Dorsolateral prefrontal cortex (tissue), 120 donors: ENCODE measurements at regions of chr19 and their contacts with region 1.

Region 1: GRCh38 chr19:34232566-34233481 is 21.5 kb upstream of the GARRE1 start:
- DNase-seq: peak in 6 of 10 donors; percentile 35 to 73 (median 55)
- H3K4me3 ChIP-seq: peak overlapping the region in 19 of 59 donors; percentile 1 to 38 (median 18)
- H3K27ac ChIP-seq: peak overlapping the region; percentile 40 to 97 (median 90)
- H3K27me3 ChIP-seq: no peaks in the 10 kb centered on the region
- CTCF ChIP-seq: peak in 2 of 56 donors; percentile 15

Region 2: DNA sequence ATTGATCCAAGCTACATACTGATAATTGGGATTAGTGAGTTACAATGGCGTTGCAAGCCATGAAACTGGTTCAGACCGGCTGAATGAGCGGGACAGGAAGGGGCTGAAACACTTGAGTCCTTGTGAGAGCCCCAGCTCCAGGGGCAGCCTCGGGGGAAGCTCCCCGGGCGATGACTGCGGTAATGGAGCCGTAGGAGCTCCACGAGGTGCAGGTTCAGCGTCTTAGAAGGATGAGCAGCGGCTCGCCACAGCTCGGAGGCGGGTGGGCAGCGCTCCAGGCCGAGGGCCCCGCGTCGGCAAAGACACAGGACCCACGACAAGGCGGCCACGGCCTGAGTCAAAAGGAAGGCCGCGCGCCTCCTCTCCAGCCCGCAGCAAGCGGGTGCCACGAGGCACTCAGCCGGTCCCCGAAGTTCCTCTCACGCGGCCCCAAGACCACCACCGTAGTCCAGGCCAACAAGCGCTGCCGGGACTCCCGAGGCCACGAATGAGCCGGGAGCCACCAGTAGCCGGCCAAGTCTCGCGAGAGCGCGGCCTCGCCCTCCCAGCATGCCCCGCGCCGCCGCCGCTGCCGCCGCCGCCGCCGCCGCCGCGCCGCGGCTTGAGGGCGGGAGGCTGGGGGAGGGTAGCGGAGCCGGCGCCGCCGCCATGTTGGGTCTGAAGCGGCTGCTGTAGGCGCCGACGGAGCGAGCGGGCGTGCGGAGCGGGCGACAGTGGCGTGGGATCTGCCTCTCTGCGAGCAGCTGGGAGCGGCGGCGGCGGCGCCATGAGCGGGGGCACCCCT is 60.8 kb before region 1 on chr19 and contains the start of gene LSM14A:
- intact Hi-C with region 1: loop called in 1 of 2 experiments (anchors 5 kb)
- DNase-seq: peak; percentile 71 to 93 (median 82)
- H3K4me3 ChIP-seq: peak within 1 kb of the TSS; percentile 74 to 99 (median 94)
- H3K27ac ChIP-seq: peak within 1 kb of the TSS; percentile 91 to 100 (median 99)
- H3K27me3 ChIP-seq: no peaks in the 10 kb centered on the region
- CTCF ChIP-seq: peak in 14 of 56 donors; percentile 6 to 30 (median 14)
- total RNA-seq, gene LSM14A: 52.9 to 108 (median 72.5) TPM

Region 3: GRCh38 chr19:34184880-34185491 is 47.8 kb before region 1 on chr19:
- intact Hi-C with region 1: no loop called
- DNase-seq: no peak
- H3K4me3 ChIP-seq: peak overlapping the region in 1 of 59 donors; percentile 3
- H3K27ac ChIP-seq: peak overlapping the region in 15 of 59 donors; percentile 0 to 50 (median 21)
- H3K27me3 ChIP-seq: no peaks in the 10 kb centered on the region
- CTCF ChIP-seq: no peak

Region 4: GRCh38 chr19:34244611-34245299 is 11.9 kb after region 1 on chr19:
- intact Hi-C with region 1: no loop called
- DNase-seq: no peak
- H3K4me3 ChIP-seq: no peak overlapping the region
- H3K27ac ChIP-seq: no peak overlapping the region
- H3K27me3 ChIP-seq: no peaks in the 10 kb centered on the region
- CTCF ChIP-seq: no peak

Region 5: DNA sequence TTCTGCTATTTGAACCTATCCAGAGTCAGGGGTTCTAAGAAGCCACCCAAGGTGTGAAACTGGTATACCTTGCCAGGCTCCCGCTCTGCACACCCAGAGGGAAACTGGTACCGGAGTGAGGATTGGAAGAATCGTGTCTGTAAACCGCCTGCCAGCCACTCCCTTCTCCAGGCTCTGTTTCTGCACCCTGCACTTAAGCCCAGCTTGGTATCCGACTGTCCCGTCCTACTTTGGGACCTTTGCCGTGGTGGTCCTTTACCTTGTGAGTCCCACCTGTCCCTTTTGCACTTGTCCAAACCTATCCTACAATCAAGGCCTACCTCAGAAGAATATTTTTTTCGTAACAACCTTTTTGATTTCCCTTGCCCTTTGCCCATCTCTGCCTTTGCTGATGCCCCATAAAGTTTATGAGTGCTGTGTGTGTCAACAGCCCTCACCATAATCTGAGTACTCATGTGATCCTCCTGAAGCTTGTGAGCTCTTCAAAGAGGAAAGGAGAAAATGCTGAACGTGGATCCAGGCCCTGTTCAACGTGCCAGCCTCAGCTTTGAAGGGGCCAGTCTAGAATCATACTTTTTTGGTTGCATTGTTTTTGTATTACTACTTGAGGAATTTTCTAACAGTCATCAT is 66.2 kb after region 1 on chr19:
- intact Hi-C with region 1: no loop called
- DNase-seq: no peak
- H3K4me3 ChIP-seq: no peak overlapping the region
- H3K27ac ChIP-seq: no peak overlapping the region
- H3K27me3 ChIP-seq: no peaks in the 10 kb centered on the region
- CTCF ChIP-seq: no peak

Region 6: DNA sequence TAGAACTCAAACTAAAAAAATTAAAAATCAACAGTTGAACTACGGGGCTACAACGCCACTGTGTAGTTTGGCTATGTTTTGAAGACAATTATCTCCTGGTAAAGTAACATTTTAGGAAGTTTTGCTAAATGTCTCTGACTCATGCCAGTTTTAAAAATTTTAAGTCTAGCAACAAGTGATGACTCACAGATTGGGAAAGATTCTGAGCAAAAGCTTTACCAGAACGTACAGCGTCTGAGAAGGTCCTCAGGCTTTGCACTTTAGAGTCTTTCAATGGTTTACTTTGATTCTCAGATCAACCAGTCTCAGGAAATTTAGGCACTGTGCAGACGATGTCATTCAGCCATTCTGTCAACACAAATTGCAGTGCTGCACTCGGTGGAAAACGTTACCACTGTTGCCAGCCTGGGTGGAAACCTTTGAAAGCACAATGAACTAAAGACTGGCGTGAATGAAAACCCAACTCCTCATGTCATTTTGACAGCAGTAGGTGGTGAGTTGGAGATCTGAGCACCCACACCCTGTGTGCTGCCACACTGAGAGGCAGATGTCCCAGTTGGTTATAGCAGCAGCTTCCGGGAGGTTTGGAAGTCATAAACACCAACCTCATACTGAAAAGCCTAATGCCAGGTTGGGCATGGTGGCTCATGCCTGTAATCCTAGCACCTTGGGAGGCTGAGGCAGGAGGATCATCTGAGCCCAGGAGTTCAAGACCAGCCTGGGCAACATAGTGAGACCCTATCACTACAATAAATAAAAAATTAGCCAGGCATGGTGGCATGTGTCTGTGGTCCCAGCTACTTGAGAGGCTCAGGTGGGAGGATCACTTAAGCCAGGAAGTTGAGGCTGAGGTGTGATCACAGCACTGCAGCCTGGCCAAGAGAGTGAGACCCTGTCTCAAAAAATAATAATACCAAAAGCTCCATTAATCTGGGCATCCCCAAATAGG is 242.5 kb after region 1 on chr19:
- intact Hi-C with region 1: no loop called
- DNase-seq: no peak
- H3K4me3 ChIP-seq: no peak overlapping the region
- H3K27ac ChIP-seq: peak overlapping the region in 32 of 59 donors; percentile 0 to 68 (median 42)
- H3K27me3 ChIP-seq: peaks cover 0 to 2% (median 0%) of the 10 kb centered on the region in 45 donors
- CTCF ChIP-seq: no peak